PC-9 (cell line): ENCODE measurements at regions of chr11 and their contacts with region 1.

Region 1: DNA sequence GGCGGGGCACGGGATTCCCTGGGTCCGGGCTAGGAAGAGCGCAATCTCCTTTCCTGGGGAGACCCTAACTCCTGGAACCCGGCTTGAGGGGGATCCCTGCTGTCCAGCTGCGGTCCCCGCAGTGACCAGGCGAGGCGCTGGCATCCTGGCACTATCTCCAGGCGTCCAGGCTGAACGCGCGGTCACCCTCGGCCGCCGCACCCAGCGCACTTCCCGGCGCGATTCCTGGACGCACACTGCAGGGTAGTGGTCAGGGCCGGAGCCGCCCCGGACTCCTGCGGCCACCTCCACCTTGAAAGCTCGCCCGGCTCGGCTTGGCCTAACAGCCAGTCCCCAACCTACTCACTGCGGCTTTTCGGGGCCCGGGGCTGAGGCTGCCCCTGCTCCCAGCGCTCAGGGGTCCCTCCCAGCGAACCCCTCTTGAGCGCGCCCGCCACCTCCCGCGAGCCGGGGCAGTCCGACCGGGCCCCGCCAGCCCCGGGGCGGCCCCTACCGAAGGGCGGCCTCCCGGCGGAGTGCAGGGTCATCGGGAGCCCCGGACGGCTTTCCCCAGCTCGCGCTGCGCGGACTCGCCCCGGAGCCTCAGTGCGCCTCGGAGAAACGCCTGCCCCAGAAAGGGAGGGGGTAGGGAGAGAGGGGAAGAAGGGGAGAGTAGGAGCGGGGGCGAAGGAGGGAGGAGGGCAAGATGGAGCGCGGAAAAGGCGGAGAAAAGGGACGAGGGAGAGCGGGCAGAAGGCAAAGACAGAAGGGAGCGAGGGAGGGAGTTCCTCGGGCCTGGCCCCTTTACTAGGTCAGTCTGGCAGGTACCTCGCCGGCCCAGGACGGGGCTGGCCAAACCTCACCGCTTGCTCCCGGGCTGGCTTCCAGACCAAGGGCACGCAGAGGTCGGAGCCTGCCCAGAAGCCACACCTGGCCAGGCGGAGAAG is 1.0 kb downstream of the POU2AF3 start:
- DNase-seq: peak; percentile 56 to 71
- H3K4me3 ChIP-seq: peak overlapping the region; percentile 86
- H3K27ac ChIP-seq: no peak overlapping the region; the same call in 1 of the 2 replicates
- H3K4me1 ChIP-seq: peaks cover 41% of the 10 kb centered on the region
- H3K27me3 ChIP-seq: no peaks in the 10 kb centered on the region
- CTCF ChIP-seq: peak; percentile 83

Region 2: DNA sequence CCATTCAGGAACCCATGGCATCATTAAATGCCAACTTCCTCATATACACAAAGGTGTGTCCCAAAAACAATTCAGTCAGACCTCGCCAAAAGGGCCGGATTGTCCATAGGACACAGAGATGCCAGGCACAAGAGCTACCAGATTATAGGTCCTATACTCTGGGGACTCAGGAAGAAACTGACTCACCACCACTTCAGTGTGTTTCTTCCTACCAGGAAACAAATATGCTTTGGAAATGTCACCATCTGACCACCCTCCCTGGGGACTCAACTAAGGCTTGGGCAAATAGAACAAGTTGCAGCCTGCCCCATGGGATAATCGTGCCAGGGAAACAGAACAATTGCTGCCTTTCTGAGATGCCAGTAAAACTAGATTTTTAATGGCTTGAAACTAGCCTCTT is 10.7 kb after region 1 on chr11:
- CTCF ChIA-PET with region 1: no interaction called
- POLR2A ChIA-PET with region 1: interaction called, 20 read pairs
- intact Hi-C with region 1: no loop called
- DNase-seq: peak; percentile 24 to 41
- H3K4me3 ChIP-seq: no peak overlapping the region
- H3K27ac ChIP-seq: no peak overlapping the region
- H3K4me1 ChIP-seq: no peaks in the 10 kb centered on the region
- H3K27me3 ChIP-seq: no peaks in the 10 kb centered on the region
- CTCF ChIP-seq: no peak

Region 3: GRCh38 chr11:111327908-111328624 is 28.7 kb after region 1 on chr11:
- CTCF ChIA-PET with region 1: no interaction called
- POLR2A ChIA-PET with region 1: interaction called, 3 read pairs
- intact Hi-C with region 1: loop called (anchors 1 kb)
- DNase-seq: peak; percentile 91 to 99
- H3K4me3 ChIP-seq: no peak overlapping the region
- H3K27ac ChIP-seq: peak overlapping the region; percentile 35
- H3K4me1 ChIP-seq: peaks cover 61% of the 10 kb centered on the region
- H3K27me3 ChIP-seq: no peaks in the 10 kb centered on the region
- CTCF ChIP-seq: no peak

Region 4: GRCh38 chr11:111367411-111368284 is 68.3 kb after region 1 on chr11:
- CTCF ChIA-PET with region 1: no interaction called
- POLR2A ChIA-PET with region 1: no interaction called
- intact Hi-C with region 1: loop called (anchors 10 kb)
- DNase-seq: no peak
- H3K4me3 ChIP-seq: no peak overlapping the region
- H3K27ac ChIP-seq: no peak overlapping the region
- H3K4me1 ChIP-seq: peaks cover 7% of the 10 kb centered on the region
- H3K27me3 ChIP-seq: no peaks in the 10 kb centered on the region
- CTCF ChIP-seq: no peak

Region 5: DNA sequence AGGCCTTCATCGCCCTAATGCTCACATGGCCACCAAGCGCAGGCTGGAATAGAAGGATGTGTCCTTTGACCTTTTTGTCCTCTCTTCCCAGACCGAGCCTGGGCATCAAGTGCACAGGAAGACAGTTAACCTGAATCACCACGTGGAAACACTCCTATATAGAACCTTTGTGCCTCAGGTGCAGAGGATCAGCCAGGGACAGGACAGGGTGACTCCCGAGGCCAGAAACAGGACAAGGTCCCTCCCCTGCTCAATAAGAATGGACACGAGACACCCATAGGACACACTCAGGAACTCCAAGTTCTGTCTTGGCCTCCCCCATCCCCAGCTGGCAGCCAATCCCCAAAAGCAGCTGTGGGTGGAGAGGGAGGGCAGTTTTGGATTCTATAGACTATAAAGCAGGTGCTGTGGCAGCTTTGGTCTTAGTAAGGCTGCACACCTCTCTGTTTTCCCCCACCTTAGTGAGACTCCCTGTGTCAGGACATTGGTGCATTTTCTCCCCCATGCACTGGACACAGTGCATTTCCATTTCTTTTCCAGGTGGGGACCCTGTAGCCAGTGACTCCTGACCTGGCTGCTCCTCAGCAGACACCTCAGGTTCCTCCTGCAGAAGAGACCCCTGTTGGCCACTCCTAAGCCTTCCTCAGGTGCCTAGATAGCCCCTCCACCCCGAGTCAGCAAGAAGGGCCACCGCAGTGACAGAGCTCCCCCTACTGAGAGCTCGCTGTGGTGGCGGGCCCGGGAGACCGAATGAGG is 123.3 kb after region 1 on chr11:
- CTCF ChIA-PET with region 1: no interaction called
- POLR2A ChIA-PET with region 1: no interaction called
- intact Hi-C with region 1: loop called (anchors 1 kb)
- DNase-seq: peak; percentile 57 to 63
- H3K4me3 ChIP-seq: no peak overlapping the region
- H3K27ac ChIP-seq: no peak overlapping the region
- H3K4me1 ChIP-seq: no peaks in the 10 kb centered on the region
- H3K27me3 ChIP-seq: no peaks in the 10 kb centered on the region
- CTCF ChIP-seq: peak; percentile 95

Region 6: DNA sequence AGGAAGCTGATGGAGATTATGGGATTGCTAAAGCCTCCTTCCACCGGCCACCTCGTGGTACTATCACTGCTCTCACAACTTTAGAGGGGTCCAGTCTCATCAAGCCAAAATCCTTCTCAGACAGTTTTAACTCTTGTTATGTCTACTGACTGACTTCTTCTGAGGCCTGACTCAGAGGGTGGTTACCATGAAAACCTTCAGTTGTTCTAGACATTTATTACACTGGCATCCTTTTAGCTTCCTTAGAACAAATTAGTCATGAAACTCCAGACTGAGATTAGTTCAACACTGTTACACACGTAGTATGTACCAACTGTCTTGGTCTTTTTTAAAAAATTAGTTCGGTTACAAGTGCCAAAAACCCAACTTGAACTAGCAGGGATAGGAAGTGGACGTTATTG is 645.3 kb after region 1 on chr11:
- CTCF ChIA-PET with region 1: no interaction called
- POLR2A ChIA-PET with region 1: no interaction called
- intact Hi-C with region 1: no loop called
- DNase-seq: peak in 1 of 2 experiments; percentile 59
- H3K4me3 ChIP-seq: no peak overlapping the region
- H3K27ac ChIP-seq: 0 out of 2 replicates have a peak overlapping the region, but pooled peaks have one; percentile 7
- H3K4me1 ChIP-seq: peaks cover 14% of the 10 kb centered on the region; the same call in 1 of the 2 replicates
- H3K27me3 ChIP-seq: no peaks in the 10 kb centered on the region
- CTCF ChIP-seq: no peak